Ascending aorta (tissue), 2 donors: ENCODE measurements at regions of chr6 and their contacts with region 1.

Region 1: GRCh38 chr6:46848684-46849360 is 55.6 kb downstream of the MEP1A start:
- DNase-seq: peak; percentile 16 to 88
- H3K4me3 ChIP-seq: no peak overlapping the region
- H3K27ac ChIP-seq: no peak overlapping the region
- H3K4me1 ChIP-seq: peaks cover 0 to 4% of the 10 kb centered on the region in 2 donors
- H3K27me3 ChIP-seq: no peaks in the 10 kb centered on the region
- CTCF ChIP-seq: peak; percentile 93 to 98 (median 97)

Region 2: GRCh38 chr6:46993846-46994245 is 145.0 kb after region 1 on chr6:
- intact Hi-C with region 1: loop called (anchors 1 kb)
- DNase-seq: no peak
- H3K4me3 ChIP-seq: no peak overlapping the region
- H3K27ac ChIP-seq: no peak overlapping the region
- H3K4me1 ChIP-seq: peaks cover 5 to 17% of the 10 kb centered on the region in 2 donors
- H3K27me3 ChIP-seq: no peaks in the 10 kb centered on the region
- CTCF ChIP-seq: no peak

Region 3: GRCh38 chr6:47047479-47048407 is 198.9 kb after region 1 on chr6:
- intact Hi-C with region 1: loop called (anchors 1 kb)
- DNase-seq: peak in 1 of 2 donors; percentile 65
- H3K4me3 ChIP-seq: no peak overlapping the region
- H3K27ac ChIP-seq: no peak overlapping the region
- H3K4me1 ChIP-seq: no peaks in the 10 kb centered on the region
- H3K27me3 ChIP-seq: no peaks in the 10 kb centered on the region
- CTCF ChIP-seq: peak; percentile 43 to 59 (median 52)